ENCODE measurements at regions of chr7 and their contacts with region 1.

Region 1: DNA sequence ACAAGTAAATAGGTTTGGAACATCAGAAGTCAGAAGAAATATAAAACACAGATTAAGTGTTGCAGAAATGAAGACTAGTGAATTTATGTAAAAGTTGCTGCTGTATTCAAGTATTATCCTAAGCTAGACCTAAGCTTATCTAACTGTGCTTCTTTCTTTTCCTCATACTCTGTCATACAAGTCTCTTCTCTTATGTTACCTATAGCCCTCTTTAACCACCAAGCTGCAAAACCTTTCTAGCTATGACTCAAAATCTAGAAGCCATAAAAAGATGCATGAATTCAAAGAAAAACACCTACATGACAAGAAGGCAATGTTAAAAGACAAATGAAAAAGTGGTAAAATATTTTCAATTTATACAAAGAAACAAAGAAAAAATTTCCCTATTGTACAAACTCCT is 23.0 kb downstream of the DENND11 start:
- DNase-seq: no peak
- H3K4me3 Mint-ChIP-seq: no peak overlapping the region
- H3K27ac Mint-ChIP-seq: no peak overlapping the region
- H3K4me1 Mint-ChIP-seq: peaks cover 20% of the 10 kb centered on the region
- H3K27me3 Mint-ChIP-seq: no peaks in the 10 kb centered on the region

Region 2: GRCh38 chr7:141701489-141702046 is 22.6 kb after region 1 on chr7:
- CTCF ChIA-PET with region 1: no interaction called
- POLR2A ChIA-PET with region 1: no interaction called
- intact Hi-C with region 1: loop called (anchors 1 kb)
- DNase-seq: peak; percentile 79
- H3K4me3 Mint-ChIP-seq: peak overlapping the region; percentile 79
- H3K27ac Mint-ChIP-seq: no peak overlapping the region
- H3K4me1 Mint-ChIP-seq: peaks cover 47% of the 10 kb centered on the region
- H3K27me3 Mint-ChIP-seq: peaks cover 2% of the 10 kb centered on the region

Measured in activated CD4-positive, alpha-beta memory T cell treated with anti-CD3 and anti-CD28 coated beads for 36 hours (primary cell).